Caco-2 (cell line): ENCODE measurements at regions of chr9 and their contacts with region 1.

Region 1: GRCh38 chr9:89000973-89001916 is 10.0 kb downstream of the S1PR3 start:
- DNase-seq: peak; percentile 74
- H3K4me3 ChIP-seq: no peak overlapping the region
- H3K4me3 Mint-ChIP-seq: no peak overlapping the region
- H3K27ac Mint-ChIP-seq: no peak overlapping the region
- H3K4me1 ChIP-seq: no peaks in the 10 kb centered on the region
- H3K4me1 Mint-ChIP-seq: no peaks in the 10 kb centered on the region
- H3K27me3 ChIP-seq: no peaks in the 10 kb centered on the region
- H3K27me3 Mint-ChIP-seq: no peaks in the 10 kb centered on the region
- CTCF ChIP-seq: peak; percentile 53 to 55

Region 2: DNA sequence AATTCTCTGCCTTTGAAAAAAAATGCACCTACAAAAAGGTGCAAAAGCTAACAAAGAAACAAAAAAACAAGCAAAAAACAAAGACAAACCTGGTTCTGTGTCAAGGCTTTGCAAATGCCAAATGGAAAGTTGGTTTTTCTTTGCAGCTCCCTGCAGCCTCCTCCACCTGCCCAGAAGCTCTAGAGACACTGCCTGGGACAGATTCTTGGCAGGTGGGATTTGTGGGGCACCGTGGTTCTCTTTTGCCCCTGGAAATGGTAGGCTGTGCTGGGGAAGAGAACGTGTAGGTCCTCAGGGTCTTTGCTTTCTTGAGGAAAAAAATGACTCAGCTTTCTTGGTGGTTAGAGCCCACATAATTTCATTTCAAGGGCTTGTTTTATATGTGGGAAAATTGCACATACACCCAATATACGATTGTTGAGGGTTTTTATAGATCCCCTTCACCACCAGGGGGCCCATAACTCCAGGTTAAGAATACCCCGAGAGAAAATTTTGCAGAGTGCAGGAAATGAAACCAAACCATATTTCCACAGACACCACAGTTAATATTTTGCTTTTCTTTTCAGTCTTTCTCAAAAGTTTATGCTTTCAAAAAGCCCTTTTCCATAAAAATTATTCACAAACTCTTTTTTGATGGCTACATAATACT is 407.6 kb before region 1 on chr9:
- CTCF ChIA-PET with region 1: no interaction called
- POLR2A ChIA-PET with region 1: no interaction called
- intact Hi-C with region 1: loop called (anchors 1 kb)
- DNase-seq: peak in 1 of 2 experiments; percentile 45
- H3K4me3 ChIP-seq: no peak overlapping the region
- H3K4me3 Mint-ChIP-seq: no peak overlapping the region
- H3K27ac Mint-ChIP-seq: no peak overlapping the region
- H3K4me1 ChIP-seq: no peaks in the 10 kb centered on the region
- H3K4me1 Mint-ChIP-seq: no peaks in the 10 kb centered on the region
- H3K27me3 ChIP-seq: no peaks in the 10 kb centered on the region
- H3K27me3 Mint-ChIP-seq: peaks cover 3% of the 10 kb centered on the region
- CTCF ChIP-seq: peak in 1 of 2 experiments; percentile 50

Region 3: GRCh38 chr9:88660611-88661010 is 340.6 kb before region 1 on chr9:
- CTCF ChIA-PET with region 1: interaction called, 9 read pairs
- POLR2A ChIA-PET with region 1: no interaction called
- intact Hi-C with region 1: loop called (anchors 1 kb)
- DNase-seq: peak; percentile 35 to 46
- H3K4me3 ChIP-seq: no peak overlapping the region
- H3K4me3 Mint-ChIP-seq: no peak overlapping the region
- H3K27ac Mint-ChIP-seq: no peak overlapping the region
- H3K4me1 ChIP-seq: no peaks in the 10 kb centered on the region
- H3K4me1 Mint-ChIP-seq: no peaks in the 10 kb centered on the region
- H3K27me3 ChIP-seq: no peaks in the 10 kb centered on the region
- H3K27me3 Mint-ChIP-seq: no peaks in the 10 kb centered on the region
- CTCF ChIP-seq: peak; percentile 23 to 39

Region 4: DNA sequence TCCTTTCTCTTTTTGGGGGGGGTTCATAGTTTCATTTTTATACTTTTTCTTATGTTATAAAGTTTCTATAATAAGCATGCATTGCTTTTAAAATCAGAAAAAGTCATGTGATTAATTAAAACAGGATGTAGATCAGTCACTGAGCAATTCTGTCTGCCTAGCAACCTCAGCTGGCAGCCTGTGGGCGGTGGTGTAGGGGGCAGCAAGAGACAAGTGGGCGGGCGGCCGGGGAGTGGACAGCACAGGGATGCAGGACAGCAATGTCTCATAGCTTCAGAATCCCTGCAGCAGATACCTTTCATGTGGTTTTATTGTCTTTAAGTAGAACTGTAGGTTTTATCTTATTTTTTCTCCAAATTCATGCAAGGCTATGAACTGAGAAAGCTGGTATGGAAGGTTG is 111.9 kb before region 1 on chr9:
- CTCF ChIA-PET with region 1: no interaction called
- POLR2A ChIA-PET with region 1: no interaction called
- intact Hi-C with region 1: loop called (anchors 5 kb)
- DNase-seq: no peak
- H3K4me3 ChIP-seq: no peak overlapping the region
- H3K4me3 Mint-ChIP-seq: no peak overlapping the region
- H3K27ac Mint-ChIP-seq: no peak overlapping the region
- H3K4me1 ChIP-seq: no peaks in the 10 kb centered on the region
- H3K4me1 Mint-ChIP-seq: no peaks in the 10 kb centered on the region
- H3K27me3 ChIP-seq: no peaks in the 10 kb centered on the region
- H3K27me3 Mint-ChIP-seq: peaks cover under 1% of the 10 kb centered on the region
- CTCF ChIP-seq: no peak